Mammary epithelial cell (primary cell): ENCODE measurements at regions of chr3 and their contacts with region 1.

Region 1: DNA sequence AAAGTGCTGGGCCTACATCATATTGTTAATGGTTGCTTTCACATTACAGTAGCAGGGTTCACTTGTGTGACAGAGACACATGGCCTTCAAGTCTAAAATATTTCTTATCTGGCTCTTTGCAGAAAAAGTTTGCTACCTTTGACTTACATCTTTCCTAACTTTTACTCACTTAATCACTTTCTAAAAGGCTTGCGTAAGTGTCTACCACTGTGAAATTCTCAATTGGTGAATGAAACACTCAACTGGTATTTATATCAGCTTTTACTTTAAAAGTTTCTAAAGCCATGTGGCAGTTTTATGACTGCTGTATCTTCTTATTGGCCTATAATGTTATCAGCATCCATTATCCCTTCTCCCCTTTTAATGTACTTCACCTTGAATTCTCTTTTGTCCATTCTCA is 554.5 kb downstream of the ZIC1 start:
- DNase-seq: no peak
- H3K4me3 ChIP-seq: no peak overlapping the region
- H3K27ac ChIP-seq: no peak overlapping the region
- H3K4me1 ChIP-seq: no peaks in the 10 kb centered on the region
- H3K27me3 ChIP-seq: no peaks in the 10 kb centered on the region
- CTCF ChIP-seq: no peak

Region 2: GRCh38 chr3:147906275-147906674 is 57.4 kb before region 1 on chr3:
- CTCF ChIA-PET with region 1: no interaction called
- dilution Hi-C with region 1: no loop called
- in situ Hi-C with region 1: no loop called
- intact Hi-C with region 1: loop called (anchors 10 kb)
- DNase-seq: peak; percentile 41
- H3K4me3 ChIP-seq: no peak overlapping the region
- H3K27ac ChIP-seq: no peak overlapping the region
- H3K4me1 ChIP-seq: no peaks in the 10 kb centered on the region
- H3K27me3 ChIP-seq: no peaks in the 10 kb centered on the region
- CTCF ChIP-seq: no peak

Region 3: DNA sequence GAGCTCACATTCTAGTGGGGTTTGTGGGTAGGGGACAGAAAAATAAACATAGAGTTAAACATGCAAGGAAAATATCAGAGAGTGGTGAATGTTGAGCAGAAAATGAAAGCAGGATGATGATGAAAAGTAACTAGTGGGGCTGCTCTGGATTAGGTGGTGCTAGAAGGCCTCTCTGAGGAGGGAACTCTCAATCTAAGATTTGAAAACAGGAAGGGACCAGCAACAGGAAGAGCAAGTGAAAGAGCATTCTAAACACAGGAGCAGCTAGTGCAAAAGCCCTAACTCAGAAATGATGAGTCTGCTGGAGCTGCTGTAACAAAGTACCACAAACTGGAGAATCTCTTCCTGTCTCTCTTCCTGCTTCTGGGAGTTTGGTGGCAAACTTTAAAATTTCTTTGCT is 265.4 kb after region 1 on chr3:
- CTCF ChIA-PET with region 1: no interaction called
- dilution Hi-C with region 1: no loop called
- in situ Hi-C with region 1: no loop called
- intact Hi-C with region 1: no loop called
- DNase-seq: no peak
- H3K4me3 ChIP-seq: no peak overlapping the region
- H3K27ac ChIP-seq: no peak overlapping the region
- H3K4me1 ChIP-seq: peaks cover 16% of the 10 kb centered on the region
- H3K27me3 ChIP-seq: no peaks in the 10 kb centered on the region
- CTCF ChIP-seq: no peak